IMR-90 (cell line): ENCODE measurements at regions of chr1 and their contacts with region 1.

Region 1: GRCh38 chr1:204213668-204214662 is at the start of gene GOLT1A:
- DNase-seq: peak; percentile 87
- ATAC-seq: peak; percentile 97
- H3K4me3 ChIP-seq: no peak within 1 kb of the TSS
- H3K27ac ChIP-seq: no peak within 1 kb of the TSS
- H3K4me1 ChIP-seq: 0 out of 2 replicates have a peak, but pooled peaks cover 1% of the 10 kb centered on the region
- H3K27me3 ChIP-seq: no peaks in the 10 kb centered on the region; the same call in 1 of the 2 replicates
- CTCF ChIP-seq: peak; percentile 86
- POLR2A ChIP-seq: 0 out of 2 replicates have a peak, but pooled peaks have one; percentile 28
- RAD21 ChIP-seq: peak; percentile 86
- total RNA-seq, gene GOLT1A: not detected in 2 replicates

Region 2: GRCh38 chr1:203163891-203164635 is 1049.9 kb before region 1 on chr1:
- CTCF ChIA-PET with region 1: no interaction called
- POLR2A ChIA-PET with region 1: no interaction called
- dilution Hi-C with region 1: no loop called
- in situ Hi-C with region 1: no loop called
- intact Hi-C with region 1: no loop called
- DNase-seq: no peak
- ATAC-seq: no peak
- H3K4me3 ChIP-seq: no peak overlapping the region
- H3K27ac ChIP-seq: no peak overlapping the region
- H3K4me1 ChIP-seq: no peaks in the 10 kb centered on the region
- H3K27me3 ChIP-seq: peaks cover 35% of the 10 kb centered on the region
- CTCF ChIP-seq: no peak
- POLR2A ChIP-seq: no peak
- RAD21 ChIP-seq: no peak

Region 3: GRCh38 chr1:204257954-204258752 is 44.2 kb after region 1 on chr1:
- CTCF ChIA-PET with region 1: interaction called, 4 read pairs
- POLR2A ChIA-PET with region 1: no interaction called
- dilution Hi-C with region 1: no loop called
- in situ Hi-C with region 1: no loop called
- intact Hi-C with region 1: loop called (anchors 2 kb)
- DNase-seq: peak; percentile 63
- ATAC-seq: peak; percentile 62; the same call in 1 of the 2 replicates
- H3K4me3 ChIP-seq: no peak overlapping the region
- H3K27ac ChIP-seq: no peak overlapping the region
- H3K4me1 ChIP-seq: peaks cover 28% of the 10 kb centered on the region
- H3K27me3 ChIP-seq: no peaks in the 10 kb centered on the region
- CTCF ChIP-seq: peak; percentile 79
- POLR2A ChIP-seq: no peak
- RAD21 ChIP-seq: peak; percentile 92

Region 4: DNA sequence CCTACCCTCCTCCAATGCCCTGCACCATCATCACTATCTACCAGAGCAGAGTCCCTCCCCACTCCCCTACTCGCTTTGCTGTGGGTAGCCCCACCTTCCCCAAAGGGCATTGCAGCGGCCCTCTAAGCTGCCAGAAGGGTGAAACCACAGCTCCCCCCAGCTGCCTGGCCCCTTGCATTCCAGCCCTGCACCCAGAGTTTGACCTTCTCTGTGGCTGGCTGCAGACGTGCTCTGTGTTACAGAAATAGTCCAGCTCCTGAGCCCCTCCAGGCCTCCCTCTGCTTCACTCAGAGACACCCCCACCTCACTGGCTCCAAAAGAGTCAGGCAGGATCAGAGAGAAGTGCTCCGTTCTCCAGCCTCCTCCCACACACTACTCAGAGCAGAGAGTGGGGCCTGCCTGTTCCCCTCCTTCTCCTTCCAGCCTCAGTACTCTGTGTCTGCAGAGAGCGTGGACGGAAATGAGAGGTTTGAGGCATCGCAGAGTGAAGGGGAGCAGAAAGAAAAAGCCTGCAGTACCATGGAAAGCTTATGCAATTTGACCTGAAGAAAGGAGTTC is 82.5 kb after region 1 on chr1:
- CTCF ChIA-PET with region 1: interaction called, 3 read pairs
- POLR2A ChIA-PET with region 1: no interaction called
- dilution Hi-C with region 1: no loop called
- in situ Hi-C with region 1: no loop called
- intact Hi-C with region 1: loop called (anchors 5 kb)
- DNase-seq: peak; percentile 92
- ATAC-seq: peak; percentile 87
- H3K4me3 ChIP-seq: no peak overlapping the region
- H3K27ac ChIP-seq: peak overlapping the region; percentile 93
- H3K4me1 ChIP-seq: peaks cover 28% of the 10 kb centered on the region
- H3K27me3 ChIP-seq: no peaks in the 10 kb centered on the region
- CTCF ChIP-seq: no peak
- POLR2A ChIP-seq: no peak
- RAD21 ChIP-seq: no peak

Region 5: DNA sequence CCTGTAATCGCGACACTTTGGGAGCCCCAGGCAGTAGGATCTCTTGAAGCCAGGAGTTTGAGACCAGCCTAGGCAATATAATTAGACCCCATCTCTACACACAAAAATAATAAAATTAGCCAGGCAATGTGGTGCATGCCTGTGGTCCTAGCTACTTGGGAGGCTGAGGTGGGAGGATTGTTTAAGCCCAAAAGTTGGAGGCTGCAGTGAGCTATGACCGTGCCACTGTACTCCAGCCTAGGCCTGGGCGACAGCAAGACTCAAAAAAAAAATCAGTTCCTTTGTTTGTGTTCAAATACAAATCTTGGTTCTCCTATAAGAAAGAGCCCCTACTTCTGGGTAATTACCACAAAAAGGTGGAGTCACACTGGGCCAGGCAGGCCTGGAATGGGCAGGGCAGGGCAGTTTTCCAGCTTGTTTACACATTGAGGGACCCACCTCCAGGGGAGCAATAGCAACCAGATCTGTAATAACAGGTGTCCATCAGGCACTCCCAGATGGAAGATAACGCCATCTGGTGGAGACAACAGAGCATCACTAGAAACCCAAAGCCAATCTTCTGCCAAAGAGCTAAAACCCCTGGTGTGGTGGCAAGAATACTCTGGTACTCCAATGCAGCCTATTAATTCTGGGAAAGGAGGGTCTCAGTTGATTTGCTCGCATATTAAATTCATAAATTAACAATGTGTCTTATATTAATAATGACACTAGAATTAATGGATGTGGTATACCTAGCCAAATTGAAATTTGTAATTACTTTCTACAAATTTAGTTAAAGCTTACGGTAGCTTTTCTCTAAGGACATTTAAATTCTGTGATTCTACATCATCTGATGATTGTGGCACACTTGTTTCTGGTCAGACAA is 184.5 kb after region 1 on chr1:
- CTCF ChIA-PET with region 1: interaction called, 6 read pairs
- POLR2A ChIA-PET with region 1: no interaction called
- dilution Hi-C with region 1: no loop called
- in situ Hi-C with region 1: no loop called
- intact Hi-C with region 1: loop called (anchors 1 kb)
- DNase-seq: peak; percentile 69
- ATAC-seq: peak; percentile 83
- H3K4me3 ChIP-seq: no peak overlapping the region
- H3K27ac ChIP-seq: no peak overlapping the region
- H3K4me1 ChIP-seq: no peaks in the 10 kb centered on the region
- H3K27me3 ChIP-seq: no peaks in the 10 kb centered on the region
- CTCF ChIP-seq: peak; percentile 71
- POLR2A ChIP-seq: no peak
- RAD21 ChIP-seq: peak; percentile 51

Region 6: DNA sequence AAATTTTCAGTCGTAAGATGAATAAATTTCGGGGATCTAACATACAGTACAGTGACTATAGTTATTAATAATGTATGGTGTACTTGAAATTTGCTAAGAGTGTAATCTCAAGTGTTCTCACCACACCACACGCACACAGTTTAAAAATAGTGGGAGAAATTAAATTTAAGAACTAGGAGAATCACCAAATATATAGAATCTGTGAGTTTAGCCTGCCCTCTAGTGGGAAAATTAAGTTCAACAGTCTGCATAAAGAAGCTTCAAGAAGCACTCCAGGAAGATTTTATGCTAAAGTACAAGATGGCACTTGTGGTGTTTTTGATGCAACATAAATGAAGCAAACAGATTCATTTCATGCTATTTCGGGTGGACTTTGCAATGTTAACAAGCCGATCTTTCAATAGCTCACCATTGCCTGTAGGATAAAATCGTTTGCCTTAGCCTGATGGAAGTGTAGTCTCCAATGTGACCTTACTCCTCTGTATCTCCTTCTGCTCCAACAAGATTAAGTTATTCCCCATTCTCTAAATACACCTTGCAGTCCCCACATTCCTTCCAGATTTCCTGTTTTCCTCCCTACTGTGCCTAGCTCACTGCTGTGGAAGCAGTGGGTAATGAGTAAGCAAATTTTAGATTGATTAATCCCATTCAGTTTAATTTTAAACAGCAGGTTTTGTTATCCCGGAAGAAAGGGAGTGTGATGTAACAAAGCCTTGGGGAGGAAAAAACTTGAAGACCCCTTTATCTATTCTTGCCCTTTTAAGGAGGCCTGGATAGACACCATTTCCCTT is 289.4 kb after region 1 on chr1:
- CTCF ChIA-PET with region 1: no interaction called
- POLR2A ChIA-PET with region 1: no interaction called
- dilution Hi-C with region 1: no loop called
- in situ Hi-C with region 1: no loop called
- intact Hi-C with region 1: no loop called
- DNase-seq: peak; percentile 74
- ATAC-seq: no peak
- H3K4me3 ChIP-seq: no peak overlapping the region
- H3K27ac ChIP-seq: no peak overlapping the region
- H3K4me1 ChIP-seq: no peaks in the 10 kb centered on the region
- H3K27me3 ChIP-seq: peaks cover 11% of the 10 kb centered on the region; the same call in 1 of the 2 replicates
- CTCF ChIP-seq: peak; percentile 83
- POLR2A ChIP-seq: no peak
- RAD21 ChIP-seq: peak; percentile 90